ENCODE measurements at regions of chr4 and their contacts with region 1.

Region 1: GRCh38 chr4:139177868-139178611 is 1.0 kb upstream of the ELF2 start:
- DNase-seq: peak; percentile 85 to 98
- H3K4me3 ChIP-seq: peak overlapping the region; percentile 97
- H3K27ac ChIP-seq: peak overlapping the region; percentile 100
- H3K4me1 ChIP-seq: peaks cover 0 to 6% of the 10 kb centered on the region in 2 donors
- H3K27me3 ChIP-seq: no peaks in the 10 kb centered on the region
- CTCF ChIP-seq: peak in 1 of 3 experiments; percentile 5

Region 2: GRCh38 chr4:139015269-139015947 is 162.6 kb before region 1 on chr4 and contains the start of gene NOCT:
- intact Hi-C with region 1: loop called (anchors 1 kb)
- DNase-seq: peak; percentile 67 to 92
- H3K4me3 ChIP-seq: peak within 1 kb of the TSS; percentile 80 to 81
- H3K27ac ChIP-seq: peak within 1 kb of the TSS; percentile 83 to 96
- H3K4me1 ChIP-seq: peaks cover 0 to 8% of the 10 kb centered on the region in 2 donors
- H3K27me3 ChIP-seq: no peaks in the 10 kb centered on the region
- CTCF ChIP-seq: peak; percentile 13 to 32 (median 24)
- total RNA-seq, gene NOCT: 9.9 TPM

Region 3: DNA sequence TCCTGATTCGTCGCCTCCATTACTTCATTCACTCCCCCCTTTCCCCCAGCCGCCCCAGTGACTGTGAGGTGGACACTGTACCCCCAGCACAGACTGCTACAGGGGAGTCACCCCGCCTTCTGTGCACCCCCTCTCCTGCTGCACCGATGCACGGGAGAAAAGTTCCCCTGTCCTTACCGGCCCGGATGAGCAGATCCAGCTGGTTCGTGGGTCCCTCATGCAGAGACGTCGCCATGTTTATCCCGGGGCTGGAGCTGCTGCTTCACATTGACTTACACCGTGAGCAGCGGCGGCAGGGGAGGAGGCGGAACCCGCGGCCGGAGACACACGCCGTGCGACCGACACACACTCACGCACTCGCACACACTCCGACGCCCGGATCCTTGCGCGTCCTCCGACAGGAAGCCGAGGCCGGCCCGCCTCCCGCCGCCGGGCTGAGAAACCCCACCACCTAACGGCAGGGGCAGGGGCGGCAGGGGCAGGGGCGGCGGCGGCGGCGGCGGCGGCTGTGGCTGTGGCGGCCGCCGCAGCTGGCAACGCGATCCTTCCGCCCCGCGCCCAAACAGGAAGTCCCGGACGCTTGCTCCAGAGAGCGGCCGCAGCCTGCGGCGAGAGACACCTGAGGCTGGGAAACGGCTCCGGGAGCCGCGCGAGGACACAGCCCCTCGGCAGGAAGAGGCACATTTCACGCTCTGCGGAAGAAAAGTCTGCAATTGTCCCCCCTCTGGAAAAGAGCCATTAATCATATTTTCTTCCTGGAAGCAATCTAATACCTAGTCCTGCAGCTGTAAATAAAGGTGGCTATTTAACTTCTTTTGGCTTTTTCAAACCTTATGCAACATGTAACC is 93.9 kb before region 1 on chr4:
- intact Hi-C with region 1: loop called (anchors 1 kb)
- DNase-seq: peak; percentile 60 to 93
- H3K4me3 ChIP-seq: peak overlapping the region; percentile 83 to 92
- H3K27ac ChIP-seq: peak overlapping the region; percentile 81 to 97
- H3K4me1 ChIP-seq: peaks cover 0 to 6% of the 10 kb centered on the region in 2 donors
- H3K27me3 ChIP-seq: no peaks in the 10 kb centered on the region
- CTCF ChIP-seq: peak in 2 of 3 experiments; percentile 25 to 40

Region 4: DNA sequence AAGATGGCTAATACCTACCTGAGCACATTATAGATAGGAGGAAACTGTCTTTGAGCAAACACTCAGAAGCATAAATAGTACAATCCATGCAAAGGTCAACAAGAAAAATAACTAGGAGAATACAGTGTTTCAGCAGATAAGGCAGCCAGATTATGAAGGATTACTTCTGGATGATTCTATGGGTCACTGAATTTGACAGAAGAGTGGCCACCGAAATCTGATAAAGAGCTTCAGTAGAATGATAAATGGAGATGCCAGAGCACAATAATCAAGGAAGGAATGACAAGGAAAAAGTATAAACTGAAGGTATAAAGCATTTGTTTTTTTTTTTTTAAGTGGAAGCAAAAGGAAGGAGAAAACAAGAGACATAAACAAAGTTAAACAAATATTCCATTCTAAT is 59.7 kb before region 1 on chr4:
- intact Hi-C with region 1: no loop called
- DNase-seq: no peak
- H3K4me3 ChIP-seq: no peak overlapping the region
- H3K27ac ChIP-seq: no peak overlapping the region
- H3K4me1 ChIP-seq: no peaks in the 10 kb centered on the region
- H3K27me3 ChIP-seq: no peaks in the 10 kb centered on the region
- CTCF ChIP-seq: no peak

Region 5: GRCh38 chr4:139131209-139131870 is 46.7 kb before region 1 on chr4:
- intact Hi-C with region 1: loop called (anchors 1 kb)
- DNase-seq: no peak
- H3K4me3 ChIP-seq: peak overlapping the region in 1 of 2 donors; percentile 26
- H3K27ac ChIP-seq: peak overlapping the region; percentile 21 to 67
- H3K4me1 ChIP-seq: peaks cover 3 to 15% of the 10 kb centered on the region in 2 donors
- H3K27me3 ChIP-seq: no peaks in the 10 kb centered on the region
- CTCF ChIP-seq: no peak

Region 6: DNA sequence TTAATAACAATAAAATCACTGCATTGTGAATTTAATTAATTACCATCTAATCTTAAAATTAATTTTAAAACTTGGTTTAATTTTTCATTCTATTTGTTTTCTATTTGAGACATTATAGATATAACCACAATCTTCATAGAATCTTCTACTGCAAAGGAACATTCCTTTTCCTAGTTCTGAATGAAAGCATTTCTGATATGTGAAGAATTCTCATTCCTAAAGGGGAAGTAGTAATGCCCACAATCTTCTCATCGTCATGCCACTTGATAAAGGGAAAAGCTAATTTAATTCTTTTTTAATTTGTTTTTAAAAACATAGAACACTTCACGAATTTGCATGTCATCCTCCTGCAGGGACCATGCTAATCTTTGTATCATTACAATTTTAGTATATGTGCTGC is 78.3 kb after region 1 on chr4:
- intact Hi-C with region 1: no loop called
- DNase-seq: no peak
- H3K4me3 ChIP-seq: no peak overlapping the region
- H3K27ac ChIP-seq: no peak overlapping the region
- H3K4me1 ChIP-seq: no peaks in the 10 kb centered on the region
- H3K27me3 ChIP-seq: no peaks in the 10 kb centered on the region
- CTCF ChIP-seq: no peak

Region 7: DNA sequence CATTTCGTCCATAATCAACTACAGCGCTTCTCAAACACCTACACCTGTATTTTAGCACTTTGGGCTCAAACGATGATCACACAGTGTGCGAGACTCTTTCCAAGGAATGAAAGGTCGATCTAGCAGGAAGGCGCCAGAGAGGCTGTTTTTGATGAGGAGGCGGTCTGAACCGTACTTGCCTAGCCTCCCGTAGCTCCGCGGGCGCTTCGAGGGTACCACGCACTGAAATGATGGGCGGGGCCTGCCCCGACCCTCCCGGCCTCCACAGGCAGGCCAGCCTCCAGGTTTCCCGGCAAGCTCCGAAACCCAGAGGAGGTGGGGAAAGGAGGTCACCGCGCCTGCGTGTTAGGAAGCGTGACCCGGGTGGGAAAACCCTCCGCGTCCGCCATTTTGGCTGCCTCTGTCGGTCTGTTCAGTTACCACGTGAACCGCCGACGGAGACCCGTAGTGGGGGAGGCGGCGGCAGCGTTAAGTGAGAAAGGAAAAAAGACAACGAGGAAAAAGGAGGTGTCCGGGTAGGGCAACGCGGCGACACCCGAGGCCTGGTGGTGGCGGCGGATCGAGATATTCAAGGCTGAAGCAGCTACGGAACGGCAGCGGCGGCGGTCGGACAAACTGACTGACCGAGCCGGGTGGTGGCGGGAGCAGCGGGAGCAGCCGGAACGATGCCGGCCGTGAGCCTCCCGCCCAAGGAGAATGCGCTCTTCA is 123.2 kb after region 1 on chr4 and contains the start of gene NAA15:
- intact Hi-C with region 1: loop called (anchors 1 kb)
- DNase-seq: peak; percentile 93 to 99
- H3K4me3 ChIP-seq: peak within 1 kb of the TSS; percentile 78 to 99
- H3K27ac ChIP-seq: peak within 1 kb of the TSS; percentile 92 to 95
- H3K4me1 ChIP-seq: peaks cover 3 to 34% of the 10 kb centered on the region in 2 donors
- H3K27me3 ChIP-seq: no peaks in the 10 kb centered on the region
- CTCF ChIP-seq: no peak
- total RNA-seq, gene NAA15: 6.4 TPM

Region 8: DNA sequence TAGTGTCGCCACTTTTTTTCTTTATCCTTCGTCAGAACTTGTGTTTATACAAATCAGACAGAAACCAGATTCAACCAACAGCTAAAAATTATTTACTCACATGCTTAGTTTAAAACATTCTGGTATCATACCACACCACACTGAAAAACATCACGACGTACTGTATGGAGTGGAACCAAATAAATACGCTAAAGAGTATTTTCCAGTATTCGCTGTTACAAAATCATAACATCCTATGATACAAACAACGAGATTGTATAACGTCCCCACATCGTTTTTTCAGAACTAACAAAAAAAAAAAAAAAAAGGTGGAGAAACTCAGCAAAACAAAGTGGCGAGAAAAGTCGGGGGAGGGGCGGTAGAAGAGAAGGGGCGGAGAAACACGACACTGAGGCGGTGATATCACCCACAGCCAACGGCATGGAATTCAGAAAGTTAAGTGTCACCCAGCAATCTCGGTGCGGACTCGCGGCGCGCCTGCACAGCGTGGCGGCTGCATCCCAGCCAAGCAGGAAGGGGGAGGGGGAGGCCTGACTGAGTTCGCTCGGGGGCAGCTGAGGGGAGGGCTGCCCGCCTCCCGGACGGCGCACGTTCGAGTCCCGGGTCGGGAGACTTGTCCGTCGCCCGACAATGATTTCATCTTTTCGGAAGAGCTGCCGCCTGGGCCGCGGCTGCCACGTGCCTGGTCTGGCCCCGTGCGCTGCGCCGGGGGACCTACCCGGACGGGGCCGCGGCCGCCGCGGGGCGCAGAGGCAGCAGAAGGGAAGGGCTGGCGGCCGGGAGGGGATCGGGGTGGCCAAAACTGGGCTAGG is 377.1 kb after region 1 on chr4:
- intact Hi-C with region 1: loop called (anchors 5 kb)
- DNase-seq: peak; percentile 74 to 95
- H3K4me3 ChIP-seq: peak overlapping the region; percentile 82 to 99
- H3K27ac ChIP-seq: peak overlapping the region; percentile 99 to 100
- H3K4me1 ChIP-seq: peaks cover 0 to 30% of the 10 kb centered on the region in 2 donors
- H3K27me3 ChIP-seq: no peaks in the 10 kb centered on the region
- CTCF ChIP-seq: no peak

Measured in ascending aorta (tissue), 2 donors.